ENCODE measurements at regions of chr6 and their contacts with region 1.

Region 1: GRCh38 chr6:84033523-84034451 is at the start of gene MRAP2:
- DNase-seq: peak; percentile 60 to 85
- ATAC-seq: peak; percentile 77
- H3K4me3 ChIP-seq: peak within 1 kb of the TSS; percentile 91
- H3K27ac ChIP-seq: peak within 1 kb of the TSS; percentile 36 to 92
- H3K4me1 ChIP-seq: peaks cover 5 to 11% of the 10 kb centered on the region in 2 donors
- H3K27me3 ChIP-seq: no peaks in the 10 kb centered on the region
- total RNA-seq, gene MRAP2: 65.1 to 74.4 TPM

Region 2: GRCh38 chr6:84193114-84193708 is 159.4 kb after region 1 on chr6:
- intact Hi-C with region 1: loop called in 1 of 2 experiments (anchors 10 kb)
- DNase-seq: no peak
- ATAC-seq: peak; percentile 78
- H3K4me3 ChIP-seq: no peak overlapping the region
- H3K27ac ChIP-seq: peak overlapping the region in 1 of 2 donors; percentile 68
- H3K4me1 ChIP-seq: no peaks in the 10 kb centered on the region
- H3K27me3 ChIP-seq: no peaks in the 10 kb centered on the region